ENCODE measurements at regions of chr5 and their contacts with region 1.

Region 1: GRCh38 chr5:95858661-95859326 is 36.3 kb upstream of the GLRX start:
- DNase-seq: peak; percentile 85 to 92
- ATAC-seq: peak; percentile 72 to 87 (median 83)
- H3K4me3 ChIP-seq: peak overlapping the region in 6 of 10 donors; percentile 26 to 43 (median 30)
- H3K27ac ChIP-seq: peak overlapping the region; percentile 87 to 94 (median 90)
- H3K4me1 ChIP-seq: peaks cover 12 to 82% (median 59%) of the 10 kb centered on the region in 9 donors
- H3K27me3 ChIP-seq: no peaks in the 10 kb centered on the region
- CTCF ChIP-seq: peak in 8 of 9 donors; percentile 97 to 99 (median 98)

Region 2: GRCh38 chr5:95781101-95781583 is 77.7 kb before region 1 on chr5:
- intact Hi-C with region 1: no loop called
- DNase-seq: peak; percentile 68 to 84
- ATAC-seq: peak; percentile 88 to 95 (median 92)
- H3K4me3 ChIP-seq: no peak overlapping the region
- H3K27ac ChIP-seq: peak overlapping the region in 8 of 10 donors; percentile 5 to 77 (median 46)
- H3K4me1 ChIP-seq: peaks cover 0 to 52% (median 30%) of the 10 kb centered on the region in 9 donors
- H3K27me3 ChIP-seq: no peaks in the 10 kb centered on the region
- CTCF ChIP-seq: peak in 8 of 9 donors; percentile 70 to 96 (median 91)

Region 3: DNA sequence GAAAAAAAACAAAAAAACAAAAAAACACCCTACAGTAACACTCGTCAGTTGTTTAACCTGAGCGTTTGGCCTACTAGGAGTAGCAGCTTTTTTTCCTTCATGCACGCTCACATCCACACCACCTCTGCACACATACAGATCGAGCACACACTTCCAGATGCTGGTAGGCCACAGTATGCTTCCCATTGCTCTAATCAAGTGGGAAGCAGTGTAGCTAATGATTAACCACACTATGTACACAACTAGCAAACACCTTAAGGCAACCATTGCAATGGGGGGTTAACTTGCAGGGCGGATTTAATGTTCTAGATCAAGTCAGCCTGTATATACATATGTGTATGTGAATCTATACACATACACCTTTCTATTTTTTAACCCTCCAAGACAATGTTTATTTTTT is 29.2 kb after region 1 on chr5:
- intact Hi-C with region 1: no loop called
- DNase-seq: no peak
- ATAC-seq: no peak
- H3K4me3 ChIP-seq: no peak overlapping the region
- H3K27ac ChIP-seq: no peak overlapping the region
- H3K4me1 ChIP-seq: peaks cover 0 to 18% (median 0%) of the 10 kb centered on the region in 9 donors
- H3K27me3 ChIP-seq: no peaks in the 10 kb centered on the region
- CTCF ChIP-seq: no peak

Region 4: DNA sequence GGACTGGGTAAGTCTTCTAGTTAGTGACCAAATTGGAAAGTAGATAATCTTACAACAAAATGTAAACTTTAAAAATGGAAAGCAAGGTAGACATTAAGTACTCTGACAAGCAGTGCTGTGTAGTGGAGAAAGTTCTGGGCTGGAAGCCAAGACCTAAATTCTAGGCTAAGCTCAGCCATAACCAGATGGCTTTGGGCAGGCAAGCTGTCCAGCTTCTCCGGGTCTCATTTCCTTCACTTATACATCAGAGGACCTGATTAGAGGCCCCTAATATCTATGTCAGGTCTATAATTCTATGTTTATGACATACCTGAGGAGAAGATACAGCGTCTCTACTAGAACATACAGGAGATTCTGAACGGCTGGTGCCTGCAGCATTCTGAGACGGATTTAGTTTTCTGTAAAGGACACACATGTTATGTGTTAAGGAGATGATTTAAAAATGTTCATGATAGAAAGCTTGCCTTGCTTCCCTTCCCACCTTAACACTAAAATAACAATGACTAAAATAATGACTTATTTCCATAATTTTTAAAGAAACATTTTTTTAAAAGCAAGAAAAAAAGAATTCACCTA is 41.7 kb after region 1 on chr5:
- intact Hi-C with region 1: loop called in 1 of 10 experiments (anchors 5 kb)
- DNase-seq: peak in 1 of 2 donors; percentile 69
- ATAC-seq: peak; percentile 69 to 93 (median 87)
- H3K4me3 ChIP-seq: no peak overlapping the region
- H3K27ac ChIP-seq: peak overlapping the region in 7 of 10 donors; percentile 5 to 63 (median 46)
- H3K4me1 ChIP-seq: peaks cover 0 to 30% (median 14%) of the 10 kb centered on the region in 9 donors
- H3K27me3 ChIP-seq: no peaks in the 10 kb centered on the region
- CTCF ChIP-seq: no peak

Region 5: GRCh38 chr5:96125231-96125891 is 266.6 kb after region 1 on chr5:
- intact Hi-C with region 1: loop called in 1 of 10 experiments (anchors 10 kb)
- DNase-seq: peak in 1 of 2 donors; percentile 9
- ATAC-seq: peak; percentile 33 to 93 (median 80)
- H3K4me3 ChIP-seq: peak overlapping the region in 6 of 10 donors; percentile 4 to 28 (median 19)
- H3K27ac ChIP-seq: peak overlapping the region in 5 of 10 donors; percentile 9 to 61 (median 14)
- H3K4me1 ChIP-seq: peaks cover 0 to 29% (median 8%) of the 10 kb centered on the region in 9 donors
- H3K27me3 ChIP-seq: no peaks in the 10 kb centered on the region
- CTCF ChIP-seq: no peak

Region 6: GRCh38 chr5:96247097-96247701 is 388.4 kb after region 1 on chr5:
- intact Hi-C with region 1: loop called in 1 of 10 experiments (anchors 5 kb)
- DNase-seq: peak in 1 of 2 donors; percentile 52
- ATAC-seq: peak; percentile 67 to 97 (median 92)
- H3K4me3 ChIP-seq: peak overlapping the region in 3 of 10 donors; percentile 2 to 10 (median 5)
- H3K27ac ChIP-seq: peak overlapping the region; percentile 54 to 86 (median 74)
- H3K4me1 ChIP-seq: peaks cover 0 to 48% (median 17%) of the 10 kb centered on the region in 9 donors
- H3K27me3 ChIP-seq: no peaks in the 10 kb centered on the region
- CTCF ChIP-seq: no peak

Region 7: GRCh38 chr5:96336351-96336985 is 477.7 kb after region 1 on chr5:
- intact Hi-C with region 1: loop called (anchors 1 to 5 kb)
- DNase-seq: peak in 1 of 2 donors; percentile 78
- ATAC-seq: peak; percentile 61 to 92 (median 80)
- H3K4me3 ChIP-seq: peak overlapping the region in 2 of 10 donors; percentile 8 to 10
- H3K27ac ChIP-seq: peak overlapping the region in 8 of 10 donors; percentile 33 to 68 (median 50)
- H3K4me1 ChIP-seq: peaks cover 0 to 56% (median 15%) of the 10 kb centered on the region in 9 donors
- H3K27me3 ChIP-seq: no peaks in the 10 kb centered on the region
- CTCF ChIP-seq: peak; percentile 62 to 93 (median 88)

Region 8: DNA sequence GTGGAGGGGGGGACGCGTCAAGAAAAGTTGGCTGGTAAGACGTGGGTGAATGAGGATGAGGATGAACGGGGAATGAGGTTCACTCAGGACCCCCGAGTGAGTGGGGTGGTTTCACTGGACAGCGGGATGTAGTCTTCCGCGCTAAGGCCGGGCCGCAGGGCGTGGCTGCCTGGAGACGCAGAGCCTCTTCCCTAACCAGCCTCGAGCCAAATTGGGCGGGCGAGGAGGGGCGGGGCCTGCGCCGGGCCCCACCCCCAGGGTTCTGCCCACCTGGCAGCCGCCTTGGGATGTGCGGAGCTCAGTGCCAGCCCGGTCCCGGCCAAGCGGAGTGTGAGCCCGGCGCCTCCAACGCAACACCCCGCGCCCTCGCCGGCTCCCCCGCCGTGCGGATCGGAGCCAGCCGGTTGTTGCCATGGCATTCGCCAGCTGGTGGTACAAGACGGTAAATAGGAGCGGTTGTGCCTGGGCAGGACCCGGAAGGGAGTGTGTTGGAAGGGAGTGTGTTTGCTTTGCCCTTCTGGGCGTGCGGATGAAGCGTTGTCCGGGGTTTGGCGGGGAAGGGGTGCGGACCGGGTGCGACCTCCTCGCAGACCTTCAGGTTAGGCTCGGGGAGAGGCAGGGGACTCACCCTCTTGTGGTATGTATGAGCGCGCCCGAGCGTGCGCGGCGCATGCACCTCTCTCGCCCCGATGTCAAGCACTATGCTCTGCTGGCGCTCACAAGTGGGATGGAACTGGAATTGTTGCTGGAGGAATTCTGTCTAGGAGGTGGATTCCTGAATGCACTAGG is 804.1 kb after region 1 on chr5:
- intact Hi-C with region 1: loop called in 1 of 10 experiments (anchors 2 kb)
- DNase-seq: peak; percentile 90 to 94
- ATAC-seq: peak; percentile 92 to 97 (median 94)
- H3K4me3 ChIP-seq: peak overlapping the region; percentile 72 to 98 (median 94)
- H3K27ac ChIP-seq: peak overlapping the region; percentile 82 to 100 (median 98)
- H3K4me1 ChIP-seq: peaks cover 0 to 45% (median 27%) of the 10 kb centered on the region in 9 donors
- H3K27me3 ChIP-seq: no peaks in the 10 kb centered on the region
- CTCF ChIP-seq: peak in 1 of 9 donors; percentile 10